ENCODE measurements at regions of chr10 and their contacts with region 1.

Region 1: DNA sequence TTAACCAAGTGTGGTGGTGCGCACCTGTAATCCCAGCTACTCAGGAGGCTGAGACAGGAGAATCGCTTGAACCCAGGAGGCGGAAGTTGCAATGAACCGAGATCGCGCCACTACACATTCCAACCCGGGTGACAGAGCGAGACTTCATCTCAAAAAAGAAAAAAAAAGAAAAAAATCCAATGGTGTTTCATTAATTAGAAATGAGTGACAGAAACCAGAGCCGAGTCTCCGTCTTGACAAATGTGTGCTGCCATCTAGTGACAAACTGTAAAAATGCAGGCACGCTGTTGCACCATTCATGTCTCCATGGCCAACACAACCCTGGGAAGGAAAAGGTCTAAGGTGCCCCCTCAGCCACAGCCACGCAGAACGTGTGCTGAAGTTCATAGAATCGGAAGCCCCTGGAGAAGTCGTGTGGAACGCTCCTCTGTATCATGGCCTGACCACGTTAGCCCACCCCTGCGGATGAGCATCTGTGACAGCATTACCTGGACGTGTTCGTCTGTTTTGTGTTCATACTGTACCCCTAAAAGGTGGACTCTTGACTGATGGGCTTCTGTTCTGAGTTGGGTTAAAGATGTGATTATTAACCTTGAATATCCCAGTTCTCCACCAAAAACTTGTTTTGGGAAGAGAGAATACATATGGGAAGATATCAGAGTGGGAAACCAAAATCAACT is 94.9 kb downstream of the LYZL2 start:
- DNase-seq: no peak
- ATAC-seq: peak; percentile 71

Region 2: GRCh38 chr10:30392564-30392990 is 142.0 kb before region 1 on chr10:
- intact Hi-C with region 1: loop called (anchors 2 kb)
- DNase-seq: peak; percentile 91
- ATAC-seq: peak; percentile 98

Region 3: DNA sequence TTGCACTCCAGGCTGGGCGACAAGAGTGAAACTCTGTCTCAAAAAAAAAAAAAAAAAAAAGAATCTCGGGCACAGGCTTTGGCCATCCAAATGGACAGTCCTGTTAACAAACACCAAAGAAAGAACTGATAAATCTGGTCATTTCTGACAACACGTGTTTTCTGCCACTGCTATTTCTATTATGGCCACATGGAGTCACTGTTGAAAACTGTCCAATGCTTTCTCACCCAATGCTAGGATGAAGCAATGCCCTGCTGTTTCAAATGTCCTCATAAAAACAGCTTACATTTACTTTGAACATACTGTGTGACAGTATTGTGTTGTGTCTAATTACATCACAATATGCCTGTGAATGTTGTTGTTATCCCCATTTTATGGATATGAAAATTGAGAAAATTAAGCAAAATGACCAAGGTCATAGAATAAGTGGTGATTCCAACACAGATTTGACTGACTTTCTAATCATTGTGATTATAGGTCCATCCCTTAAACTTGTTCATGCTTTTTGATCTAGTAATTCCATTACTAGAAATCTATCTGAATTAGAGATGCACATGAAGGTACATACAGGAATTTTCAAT is 120.5 kb before region 1 on chr10:
- intact Hi-C with region 1: loop called (anchors 1 kb)
- DNase-seq: no peak
- ATAC-seq: peak; percentile 79

Region 4: GRCh38 chr10:30583778-30584415 is 49.3 kb after region 1 on chr10:
- intact Hi-C with region 1: loop called (anchors 5 kb)
- DNase-seq: peak; percentile 66
- ATAC-seq: peak; percentile 84

Region 5: GRCh38 chr10:30591249-30591670 is 56.7 kb after region 1 on chr10:
- intact Hi-C with region 1: loop called (anchors 2 kb)
- DNase-seq: no peak
- ATAC-seq: peak; percentile 51